Activated B cell treated with CpG ODN at 0.5 μM for 24 hours (primary cell): ENCODE measurements at regions of chr1 and their contacts with region 1.

Region 1: DNA sequence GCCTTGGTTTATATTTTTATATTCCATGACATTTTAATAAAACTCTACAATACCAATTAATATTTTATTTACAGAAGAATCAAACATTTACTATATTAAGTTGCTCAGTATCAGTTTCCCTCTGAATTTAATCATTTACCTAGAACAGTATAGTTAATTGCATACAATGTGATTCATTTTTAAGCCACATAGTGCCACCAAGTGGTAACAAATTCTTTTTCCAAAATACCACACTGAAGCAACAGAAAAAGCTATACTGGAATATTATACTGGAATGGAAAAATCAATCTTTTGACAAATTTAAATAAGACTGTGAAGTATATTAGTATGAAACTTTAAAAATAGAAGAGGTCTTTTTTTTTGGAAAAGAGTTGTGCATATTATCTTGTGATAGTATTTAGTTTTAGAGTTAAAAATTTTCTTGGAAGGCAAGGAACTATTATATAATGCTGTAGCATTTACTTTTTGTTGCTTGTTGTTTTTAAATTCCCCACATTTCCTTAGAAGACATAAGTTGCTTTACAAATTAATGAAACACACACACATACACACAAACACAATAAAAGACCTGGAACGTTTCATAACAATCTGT is 57.3 kb downstream of the ZNF644 start:
- DNase-seq: no peak
- ATAC-seq: no peak
- H3K4me3 Mint-ChIP-seq: no peak overlapping the region
- H3K27ac Mint-ChIP-seq: peak overlapping the region; percentile 11
- H3K4me1 Mint-ChIP-seq: peaks cover 35% of the 10 kb centered on the region
- H3K27me3 Mint-ChIP-seq: no peaks in the 10 kb centered on the region
- CTCF ChIP-seq: no peak

Region 2: DNA sequence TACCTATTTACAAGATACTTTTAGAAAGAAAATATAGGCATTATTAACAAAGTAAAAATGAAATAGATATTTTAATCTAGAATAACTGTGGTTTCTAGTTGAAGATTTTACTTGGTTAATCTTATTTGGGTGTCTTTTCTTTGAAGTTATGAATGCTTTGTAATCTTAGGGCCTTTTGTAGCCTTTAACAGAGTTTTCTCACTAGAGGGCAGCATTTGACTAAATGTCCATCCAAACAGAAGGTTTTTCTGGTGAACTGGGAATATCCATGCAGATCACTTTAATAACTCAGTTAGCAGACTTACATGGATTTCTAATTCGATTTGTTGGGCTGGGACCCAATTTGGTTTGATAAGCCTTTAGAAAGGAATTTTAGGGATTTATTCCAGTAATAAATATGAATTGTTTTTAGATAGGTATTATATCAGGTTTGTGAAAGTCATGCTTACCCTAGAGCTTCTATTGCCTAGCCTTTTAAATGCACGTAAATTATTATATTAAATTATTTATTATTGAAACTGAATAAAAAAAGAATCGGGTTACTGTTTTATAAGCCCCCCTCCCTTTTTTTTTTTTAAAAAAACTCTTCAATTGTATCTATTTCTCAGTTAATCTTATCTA is 849.9 kb before region 1 on chr1:
- CTCF ChIA-PET with region 1: no interaction called
- POLR2A ChIA-PET with region 1: no interaction called
- intact Hi-C with region 1: loop called (anchors 10 kb)
- DNase-seq: no peak
- ATAC-seq: no peak
- H3K4me3 Mint-ChIP-seq: no peak overlapping the region
- H3K27ac Mint-ChIP-seq: no peak overlapping the region
- H3K4me1 Mint-ChIP-seq: no peaks in the 10 kb centered on the region
- H3K27me3 Mint-ChIP-seq: peaks cover 16% of the 10 kb centered on the region
- CTCF ChIP-seq: no peak

Region 3: DNA sequence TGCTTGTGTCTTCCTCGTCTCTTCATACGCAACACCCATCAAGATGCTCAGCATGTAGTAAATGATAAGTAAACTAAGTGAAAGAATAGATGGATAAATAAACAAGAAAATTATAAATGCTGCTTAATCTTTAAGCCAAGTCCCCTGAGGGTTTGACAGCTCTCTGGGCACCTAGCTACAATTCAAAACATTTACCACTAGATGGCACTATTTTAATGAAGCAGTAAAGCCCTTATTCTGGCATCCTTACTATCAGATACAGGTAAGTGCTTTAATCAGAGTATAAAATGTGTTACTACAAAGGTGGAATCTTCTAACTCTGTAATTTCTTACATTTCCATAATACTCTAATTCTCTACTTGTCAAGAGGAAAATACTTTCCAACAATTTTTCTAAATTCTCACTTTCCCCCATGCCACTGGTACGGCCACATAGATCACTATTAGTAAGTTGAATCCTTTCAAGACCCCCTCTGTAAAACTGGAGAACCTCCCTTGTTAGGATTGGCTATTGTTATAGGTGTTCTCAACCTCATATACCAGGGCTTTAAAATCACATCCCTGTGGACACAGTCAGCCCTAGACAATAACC is 385.2 kb before region 1 on chr1:
- CTCF ChIA-PET with region 1: interaction called, 10 read pairs
- POLR2A ChIA-PET with region 1: no interaction called
- intact Hi-C with region 1: loop called (anchors 1 kb)
- DNase-seq: no peak
- ATAC-seq: no peak
- H3K4me3 Mint-ChIP-seq: no peak overlapping the region
- H3K27ac Mint-ChIP-seq: no peak overlapping the region
- H3K4me1 Mint-ChIP-seq: no peaks in the 10 kb centered on the region
- H3K27me3 Mint-ChIP-seq: peaks cover 6% of the 10 kb centered on the region
- CTCF ChIP-seq: peak; percentile 58

Region 4: GRCh38 chr1:90721210-90722194 is 243.0 kb before region 1 on chr1:
- CTCF ChIA-PET with region 1: interaction called, 8 read pairs
- POLR2A ChIA-PET with region 1: no interaction called
- intact Hi-C with region 1: loop called (anchors 1 kb)
- DNase-seq: no peak
- ATAC-seq: peak; percentile 40
- H3K4me3 Mint-ChIP-seq: no peak overlapping the region
- H3K27ac Mint-ChIP-seq: no peak overlapping the region
- H3K4me1 Mint-ChIP-seq: peaks cover 36% of the 10 kb centered on the region
- H3K27me3 Mint-ChIP-seq: peaks cover 79% of the 10 kb centered on the region
- CTCF ChIP-seq: no peak

Region 5: DNA sequence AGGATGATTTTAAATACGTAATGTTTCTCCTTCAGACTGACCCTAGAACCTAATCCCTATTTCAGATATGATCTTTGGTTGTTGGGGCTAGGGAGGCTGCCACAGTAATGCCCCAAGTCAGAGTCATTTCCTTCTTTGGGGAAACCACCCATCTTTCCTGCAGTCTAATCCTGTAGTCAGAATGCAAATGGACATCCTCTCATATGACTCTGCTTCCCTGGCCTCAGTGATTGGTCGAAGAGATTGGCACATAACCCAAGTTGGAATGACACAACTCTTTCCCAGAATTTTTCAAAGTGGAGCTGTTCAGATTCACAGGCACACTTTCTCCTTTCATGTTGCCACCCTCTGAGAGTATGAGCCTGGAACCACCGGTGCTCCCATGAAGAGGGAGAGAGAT is 116.1 kb after region 1 on chr1:
- CTCF ChIA-PET with region 1: no interaction called
- POLR2A ChIA-PET with region 1: no interaction called
- intact Hi-C with region 1: no loop called
- DNase-seq: no peak
- ATAC-seq: no peak
- H3K4me3 Mint-ChIP-seq: no peak overlapping the region
- H3K27ac Mint-ChIP-seq: no peak overlapping the region
- H3K4me1 Mint-ChIP-seq: peaks cover 5% of the 10 kb centered on the region
- H3K27me3 Mint-ChIP-seq: no peaks in the 10 kb centered on the region
- CTCF ChIP-seq: no peak